CD4-positive, alpha-beta memory T cell (primary cell): ENCODE measurements at regions of chr5 and their contacts with region 1.

Region 1: GRCh38 chr5:154072414-154073171 is 33.8 kb downstream of the MFAP3 start:
- DNase-seq: peak; percentile 75 to 78 (median 76)
- H3K4me3 ChIP-seq: no peak overlapping the region
- H3K4me3 Mint-ChIP-seq: peak overlapping the region in 1 of 8 donors; percentile 21
- H3K27ac ChIP-seq: no peak overlapping the region
- H3K27ac Mint-ChIP-seq: peak overlapping the region in 6 of 7 donors; percentile 1 to 89 (median 46)
- H3K4me1 ChIP-seq: peaks cover 23% of the 10 kb centered on the region
- H3K4me1 Mint-ChIP-seq: peaks cover 5 to 35% (median 14%) of the 10 kb centered on the region in 4 donors
- H3K27me3 ChIP-seq: no peaks in the 10 kb centered on the region
- H3K27me3 Mint-ChIP-seq: peaks cover 0 to 2% of the 10 kb centered on the region in 2 donors

Region 2: GRCh38 chr5:153813901-153814300 is 258.7 kb before region 1 on chr5:
- CTCF ChIA-PET with region 1: no interaction called
- POLR2A ChIA-PET with region 1: no interaction called
- intact Hi-C with region 1: no loop called
- DNase-seq: no peak
- H3K4me3 ChIP-seq: no peak overlapping the region
- H3K4me3 Mint-ChIP-seq: no peak overlapping the region
- H3K27ac ChIP-seq: no peak overlapping the region
- H3K27ac Mint-ChIP-seq: no peak overlapping the region
- H3K4me1 ChIP-seq: no peaks in the 10 kb centered on the region
- H3K4me1 Mint-ChIP-seq: no peaks in the 10 kb centered on the region
- H3K27me3 ChIP-seq: no peaks in the 10 kb centered on the region
- H3K27me3 Mint-ChIP-seq: no peaks in the 10 kb centered on the region

Region 3: DNA sequence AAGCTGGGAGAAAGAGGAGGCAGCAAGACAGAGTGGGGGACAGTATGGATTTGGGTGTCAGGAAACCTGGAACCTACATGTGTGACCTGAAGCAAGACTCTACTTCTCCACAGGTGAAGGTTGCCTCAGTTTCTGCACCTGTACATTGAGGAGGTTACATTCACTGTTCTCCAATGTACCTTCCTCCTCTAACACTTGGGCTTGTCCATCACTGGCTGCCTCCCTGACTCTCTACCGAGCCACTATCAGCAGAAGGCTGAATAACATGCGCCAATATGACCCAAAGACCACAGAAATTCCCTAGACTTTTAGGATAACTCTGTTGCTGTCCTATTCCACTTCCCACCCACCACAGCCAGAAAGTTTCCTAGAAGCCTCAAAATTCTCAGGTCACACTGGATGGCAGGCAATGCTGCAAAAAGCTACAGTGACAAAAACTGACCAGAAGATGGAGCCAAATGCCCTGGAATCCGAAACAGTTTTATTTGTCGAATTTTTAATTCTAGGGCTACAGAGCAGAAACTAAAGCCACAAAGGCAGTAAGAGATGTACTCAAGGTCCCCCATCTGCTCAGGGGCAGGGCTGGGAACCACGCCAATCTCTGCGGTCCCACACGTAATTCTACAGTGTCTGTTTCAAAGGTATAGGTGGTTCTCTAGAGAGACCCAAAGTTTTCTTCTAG is 98.3 kb before region 1 on chr5:
- CTCF ChIA-PET with region 1: interaction called, 10 read pairs
- POLR2A ChIA-PET with region 1: no interaction called
- intact Hi-C with region 1: no loop called
- DNase-seq: peak; percentile 28 to 41 (median 39)
- H3K4me3 ChIP-seq: no peak overlapping the region
- H3K4me3 Mint-ChIP-seq: no peak overlapping the region
- H3K27ac ChIP-seq: no peak overlapping the region
- H3K27ac Mint-ChIP-seq: no peak overlapping the region
- H3K4me1 ChIP-seq: no peaks in the 10 kb centered on the region
- H3K4me1 Mint-ChIP-seq: no peaks in the 10 kb centered on the region
- H3K27me3 ChIP-seq: no peaks in the 10 kb centered on the region
- H3K27me3 Mint-ChIP-seq: peaks cover 3 to 4% of the 10 kb centered on the region in 2 donors

Region 4: GRCh38 chr5:154049636-154050035 is 23.0 kb before region 1 on chr5:
- CTCF ChIA-PET with region 1: interaction called, 19 read pairs
- POLR2A ChIA-PET with region 1: no interaction called
- intact Hi-C with region 1: no loop called
- DNase-seq: no peak
- H3K4me3 ChIP-seq: no peak overlapping the region
- H3K4me3 Mint-ChIP-seq: no peak overlapping the region
- H3K27ac ChIP-seq: no peak overlapping the region
- H3K27ac Mint-ChIP-seq: peak overlapping the region in 1 of 7 donors; percentile 10
- H3K4me1 ChIP-seq: peaks cover 13% of the 10 kb centered on the region
- H3K4me1 Mint-ChIP-seq: peaks cover 25 to 58% (median 35%) of the 10 kb centered on the region in 4 donors
- H3K27me3 ChIP-seq: no peaks in the 10 kb centered on the region
- H3K27me3 Mint-ChIP-seq: no peaks in the 10 kb centered on the region

Region 5: DNA sequence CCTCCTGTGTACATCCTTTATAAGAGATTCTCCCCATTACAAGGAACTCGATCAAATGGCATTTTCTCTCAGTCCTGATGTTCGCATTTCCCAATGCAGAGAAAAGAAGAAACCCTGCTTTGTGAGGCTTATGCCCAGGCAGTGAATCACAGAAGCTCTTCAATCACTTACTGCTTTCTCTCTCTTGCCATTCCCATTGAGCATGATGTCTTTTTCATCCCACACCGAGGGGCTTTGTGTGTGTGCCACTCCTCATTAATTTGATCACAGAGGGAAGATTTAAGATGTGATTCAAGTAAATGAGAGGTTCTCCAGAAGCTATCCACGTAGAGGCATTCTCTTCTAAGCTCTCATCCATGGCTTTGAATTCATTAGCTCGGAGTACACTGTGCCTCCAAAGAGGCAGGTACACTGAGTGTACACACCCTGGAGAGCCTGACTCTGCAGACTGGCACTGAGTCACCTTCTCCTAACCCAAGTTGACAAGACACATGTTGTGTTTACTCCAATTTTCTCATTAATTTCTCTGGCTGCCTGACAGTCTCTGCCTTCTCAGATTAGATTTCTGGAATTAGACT is 11.6 kb after region 1 on chr5:
- CTCF ChIA-PET with region 1: interaction called, 15 read pairs
- POLR2A ChIA-PET with region 1: no interaction called
- intact Hi-C with region 1: no loop called
- DNase-seq: no peak
- H3K4me3 ChIP-seq: no peak overlapping the region
- H3K4me3 Mint-ChIP-seq: no peak overlapping the region
- H3K27ac ChIP-seq: no peak overlapping the region
- H3K27ac Mint-ChIP-seq: no peak overlapping the region
- H3K4me1 ChIP-seq: no peaks in the 10 kb centered on the region
- H3K4me1 Mint-ChIP-seq: peaks cover 0 to 2% (median 0%) of the 10 kb centered on the region in 4 donors
- H3K27me3 ChIP-seq: no peaks in the 10 kb centered on the region
- H3K27me3 Mint-ChIP-seq: peaks cover 0 to 2% of the 10 kb centered on the region in 2 donors

Region 6: DNA sequence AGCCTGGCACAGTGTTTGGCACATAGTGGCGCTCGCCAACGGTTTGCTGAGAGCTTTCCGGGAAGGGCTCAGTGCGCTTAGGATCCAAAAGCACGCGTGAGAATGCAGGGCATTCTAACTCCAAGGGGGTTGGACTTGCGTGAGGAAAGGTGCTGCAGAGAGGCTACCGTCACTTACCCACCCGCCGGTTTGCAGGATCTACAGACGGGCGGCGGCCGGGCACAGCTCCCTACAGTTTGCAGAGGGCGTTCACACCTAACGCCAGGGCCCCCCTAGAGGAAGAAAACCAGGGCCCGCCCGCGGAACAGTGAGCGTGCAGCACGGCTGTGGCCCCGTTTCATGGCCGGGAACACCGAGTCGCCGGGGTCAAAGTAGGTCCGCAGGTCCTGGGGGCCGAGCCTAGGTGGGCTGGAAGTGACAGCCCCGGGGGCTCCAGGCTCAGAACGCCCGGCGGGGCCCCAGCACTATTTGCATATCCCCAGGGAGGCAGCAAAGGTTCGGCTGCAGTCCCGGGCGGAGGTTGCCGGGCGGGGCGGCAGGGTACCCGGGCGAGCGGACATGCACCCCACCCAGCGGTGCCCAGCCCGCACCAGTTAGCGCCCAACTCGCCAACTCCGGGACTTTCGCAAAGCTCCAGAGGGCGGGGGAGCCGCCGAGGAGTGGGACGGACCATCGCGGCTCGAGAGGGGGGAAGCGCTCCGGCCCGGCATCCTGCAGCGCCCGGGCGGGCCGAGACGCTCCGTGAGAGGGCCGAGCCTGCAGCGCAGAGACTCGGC is 117.4 kb after region 1 on chr5:
- CTCF ChIA-PET with region 1: interaction called, 77 read pairs
- POLR2A ChIA-PET with region 1: interaction called, 13 read pairs
- intact Hi-C with region 1: no loop called
- DNase-seq: peak; percentile 82 to 87 (median 86)
- H3K4me3 ChIP-seq: peak overlapping the region; percentile 31 to 59
- H3K4me3 Mint-ChIP-seq: peak overlapping the region; percentile 88 to 95 (median 91)
- H3K27ac ChIP-seq: peak overlapping the region; percentile 64
- H3K27ac Mint-ChIP-seq: peak overlapping the region; percentile 68 to 90 (median 84)
- H3K4me1 ChIP-seq: peaks cover 36% of the 10 kb centered on the region
- H3K4me1 Mint-ChIP-seq: peaks cover 33 to 56% (median 42%) of the 10 kb centered on the region in 4 donors
- H3K27me3 ChIP-seq: no peaks in the 10 kb centered on the region
- H3K27me3 Mint-ChIP-seq: no peaks in the 10 kb centered on the region

Region 7: GRCh38 chr5:154211641-154212390 is 139.2 kb after region 1 on chr5:
- CTCF ChIA-PET with region 1: no interaction called
- POLR2A ChIA-PET with region 1: no interaction called
- intact Hi-C with region 1: no loop called
- DNase-seq: no peak
- H3K4me3 ChIP-seq: no peak overlapping the region
- H3K4me3 Mint-ChIP-seq: no peak overlapping the region
- H3K27ac ChIP-seq: no peak overlapping the region
- H3K27ac Mint-ChIP-seq: peak overlapping the region in 2 of 7 donors; percentile 43 to 62
- H3K4me1 ChIP-seq: peaks cover 19% of the 10 kb centered on the region
- H3K4me1 Mint-ChIP-seq: peaks cover 14 to 55% (median 32%) of the 10 kb centered on the region in 4 donors
- H3K27me3 ChIP-seq: no peaks in the 10 kb centered on the region
- H3K27me3 Mint-ChIP-seq: no peaks in the 10 kb centered on the region

Region 8: DNA sequence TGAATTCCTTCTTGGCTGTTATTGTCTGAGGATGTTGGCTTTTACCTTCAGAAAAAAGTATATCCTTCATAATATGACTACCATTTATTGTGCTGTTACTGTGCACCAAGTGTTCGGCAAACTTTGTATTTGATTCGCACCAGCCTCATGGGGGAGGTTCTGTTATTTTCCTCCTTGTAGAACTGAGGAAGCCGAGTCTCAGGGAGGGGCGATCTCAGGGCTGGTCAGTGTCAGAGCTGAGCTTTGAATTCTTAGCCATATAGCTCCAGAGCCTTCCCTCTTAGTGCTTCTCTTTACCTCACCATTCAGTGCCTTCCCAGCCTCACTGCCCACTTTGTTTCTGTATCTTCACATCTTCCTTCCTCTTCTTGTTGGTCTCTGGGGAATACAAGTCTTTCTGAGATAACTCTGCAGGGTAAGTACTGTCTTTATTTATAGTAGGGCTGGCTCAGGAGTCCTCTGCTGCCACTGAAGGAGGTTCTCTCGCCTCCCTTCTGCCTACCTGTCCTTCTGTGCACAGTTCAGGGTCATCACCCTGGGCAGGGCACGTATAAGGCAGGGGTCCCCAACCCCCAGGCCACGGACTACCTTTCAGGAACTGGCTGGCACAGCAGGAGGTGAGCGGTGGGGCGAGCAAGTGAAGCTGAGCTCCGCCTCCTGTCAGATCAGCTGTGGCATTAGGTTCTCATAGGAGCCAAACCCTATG is 166.3 kb after region 1 on chr5:
- CTCF ChIA-PET with region 1: interaction called, 32 read pairs
- POLR2A ChIA-PET with region 1: interaction called, 3 read pairs
- intact Hi-C with region 1: loop called (anchors 5 kb)
- DNase-seq: no peak
- H3K4me3 ChIP-seq: no peak overlapping the region
- H3K4me3 Mint-ChIP-seq: no peak overlapping the region
- H3K27ac ChIP-seq: no peak overlapping the region
- H3K27ac Mint-ChIP-seq: peak overlapping the region in 2 of 7 donors; percentile 2 to 54
- H3K4me1 ChIP-seq: no peaks in the 10 kb centered on the region
- H3K4me1 Mint-ChIP-seq: peaks cover 16 to 47% (median 30%) of the 10 kb centered on the region in 4 donors
- H3K27me3 ChIP-seq: no peaks in the 10 kb centered on the region
- H3K27me3 Mint-ChIP-seq: no peaks in the 10 kb centered on the region